CD8-positive, alpha-beta memory T cell (primary cell): ENCODE measurements at regions of chr14 and their contacts with region 1.

Region 1: GRCh38 chr14:74860906-74861733 is 14.8 kb downstream of the PROX2 start:
- DNase-seq: peak; percentile 76 to 92 (median 86)
- H3K4me3 ChIP-seq: no peak overlapping the region
- H3K4me3 Mint-ChIP-seq: no peak overlapping the region
- H3K27ac ChIP-seq: no peak overlapping the region
- H3K27ac Mint-ChIP-seq: no peak overlapping the region
- H3K4me1 ChIP-seq: peaks cover 8% of the 10 kb centered on the region
- H3K4me1 Mint-ChIP-seq: peaks cover 4 to 7% (median 6%) of the 10 kb centered on the region in 3 donors
- H3K27me3 ChIP-seq: no peaks in the 10 kb centered on the region
- H3K27me3 Mint-ChIP-seq: peaks cover 0 to 1% of the 10 kb centered on the region in 2 donors

Region 2: GRCh38 chr14:74841230-74842207 is 19.6 kb before region 1 on chr14:
- CTCF ChIA-PET with region 1: interaction called, 15 read pairs
- POLR2A ChIA-PET with region 1: interaction called, 3 read pairs
- DNase-seq: peak in 1 of 5 donors; percentile 11
- H3K4me3 ChIP-seq: no peak overlapping the region
- H3K4me3 Mint-ChIP-seq: peak overlapping the region in 6 of 7 donors; percentile 26 to 42 (median 36)
- H3K27ac ChIP-seq: no peak overlapping the region
- H3K27ac Mint-ChIP-seq: peak overlapping the region; percentile 69 to 99 (median 90)
- H3K4me1 ChIP-seq: peaks cover 68% of the 10 kb centered on the region
- H3K4me1 Mint-ChIP-seq: peaks cover 51 to 62% (median 60%) of the 10 kb centered on the region in 3 donors
- H3K27me3 ChIP-seq: no peaks in the 10 kb centered on the region
- H3K27me3 Mint-ChIP-seq: no peaks in the 10 kb centered on the region

Region 3: GRCh38 chr14:74893614-74894091 is 32.5 kb after region 1 on chr14:
- CTCF ChIA-PET with region 1: interaction called, 50 read pairs
- POLR2A ChIA-PET with region 1: interaction called, 3 read pairs
- DNase-seq: no peak
- H3K4me3 ChIP-seq: no peak overlapping the region
- H3K4me3 Mint-ChIP-seq: no peak overlapping the region
- H3K27ac ChIP-seq: no peak overlapping the region
- H3K27ac Mint-ChIP-seq: peak overlapping the region in 3 of 8 donors; percentile 47 to 86 (median 69)
- H3K4me1 ChIP-seq: peaks cover 3% of the 10 kb centered on the region
- H3K4me1 Mint-ChIP-seq: peaks cover 7 to 17% (median 8%) of the 10 kb centered on the region in 3 donors
- H3K27me3 ChIP-seq: no peaks in the 10 kb centered on the region
- H3K27me3 Mint-ChIP-seq: no peaks in the 10 kb centered on the region

Region 4: DNA sequence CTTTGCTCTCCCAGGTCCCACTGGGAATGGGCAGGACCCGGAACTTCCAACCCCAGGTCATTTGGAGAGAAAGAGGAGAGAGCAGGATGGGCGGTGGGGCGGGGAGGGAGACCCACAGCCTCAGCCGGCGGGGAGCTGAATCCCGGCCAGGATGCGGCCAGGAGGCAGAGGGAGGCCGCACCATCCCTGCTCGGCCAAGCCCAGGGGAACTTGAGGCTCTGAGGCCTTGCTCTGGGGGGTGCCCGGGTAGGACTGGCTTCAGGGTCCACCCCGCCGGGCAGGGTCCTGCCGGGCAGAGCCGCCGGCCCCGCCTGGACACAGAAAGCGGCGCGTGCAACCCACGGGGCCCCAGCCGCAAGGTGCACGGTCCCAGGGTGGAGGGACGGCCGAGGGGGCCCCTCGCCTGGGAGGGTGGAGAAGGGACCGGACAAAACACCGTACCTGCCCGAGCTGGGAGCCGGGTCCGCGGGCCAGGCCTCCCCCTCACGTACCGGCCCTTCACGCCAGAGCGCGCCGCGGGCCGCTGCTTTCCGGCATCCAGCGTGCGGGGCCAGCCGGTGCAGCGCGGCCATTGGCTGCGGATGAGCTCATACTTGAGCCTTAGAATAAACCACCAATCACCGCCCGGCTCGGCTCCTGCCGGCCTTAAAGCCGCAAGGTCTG is 61.8 kb after region 1 on chr14 and contains the start of gene RPS6KL1:
- CTCF ChIA-PET with region 1: interaction called, 13 read pairs
- POLR2A ChIA-PET with region 1: no interaction called
- DNase-seq: peak; percentile 29 to 74 (median 47)
- H3K4me3 ChIP-seq: no peak within 1 kb of the TSS
- H3K4me3 Mint-ChIP-seq: peak within 1 kb of the TSS in 6 of 7 donors; percentile 37 to 76 (median 58)
- H3K27ac ChIP-seq: no peak within 1 kb of the TSS
- H3K27ac Mint-ChIP-seq: peak within 1 kb of the TSS in 1 of 8 donors; percentile 32
- H3K4me1 ChIP-seq: peaks cover 5% of the 10 kb centered on the region
- H3K4me1 Mint-ChIP-seq: peaks cover 0 to 13% (median 1%) of the 10 kb centered on the region in 3 donors
- H3K27me3 ChIP-seq: no peaks in the 10 kb centered on the region
- H3K27me3 Mint-ChIP-seq: peaks cover 4 to 20% of the 10 kb centered on the region in 2 donors
- total RNA-seq, gene RPS6KL1: 4.8 to 5.0 TPM

Region 5: GRCh38 chr14:74963705-74964271 is 102.7 kb after region 1 on chr14:
- CTCF ChIA-PET with region 1: no interaction called
- POLR2A ChIA-PET with region 1: no interaction called
- DNase-seq: no peak
- H3K4me3 ChIP-seq: no peak overlapping the region
- H3K4me3 Mint-ChIP-seq: no peak overlapping the region
- H3K27ac ChIP-seq: no peak overlapping the region
- H3K27ac Mint-ChIP-seq: peak overlapping the region in 1 of 8 donors; percentile 96
- H3K4me1 ChIP-seq: no peaks in the 10 kb centered on the region
- H3K4me1 Mint-ChIP-seq: no peaks in the 10 kb centered on the region
- H3K27me3 ChIP-seq: no peaks in the 10 kb centered on the region
- H3K27me3 Mint-ChIP-seq: peaks cover 9 to 16% of the 10 kb centered on the region in 2 donors

Region 6: GRCh38 chr14:75088574-75089373 is 227.7 kb after region 1 on chr14:
- CTCF ChIA-PET with region 1: interaction called, 37 read pairs
- POLR2A ChIA-PET with region 1: no interaction called
- DNase-seq: peak in 3 of 5 donors; percentile 14 to 34 (median 32)
- H3K4me3 ChIP-seq: no peak overlapping the region
- H3K4me3 Mint-ChIP-seq: no peak overlapping the region
- H3K27ac ChIP-seq: no peak overlapping the region
- H3K27ac Mint-ChIP-seq: no peak overlapping the region
- H3K4me1 ChIP-seq: no peaks in the 10 kb centered on the region
- H3K4me1 Mint-ChIP-seq: no peaks in the 10 kb centered on the region
- H3K27me3 ChIP-seq: no peaks in the 10 kb centered on the region
- H3K27me3 Mint-ChIP-seq: no peaks in the 10 kb centered on the region

Region 7: DNA sequence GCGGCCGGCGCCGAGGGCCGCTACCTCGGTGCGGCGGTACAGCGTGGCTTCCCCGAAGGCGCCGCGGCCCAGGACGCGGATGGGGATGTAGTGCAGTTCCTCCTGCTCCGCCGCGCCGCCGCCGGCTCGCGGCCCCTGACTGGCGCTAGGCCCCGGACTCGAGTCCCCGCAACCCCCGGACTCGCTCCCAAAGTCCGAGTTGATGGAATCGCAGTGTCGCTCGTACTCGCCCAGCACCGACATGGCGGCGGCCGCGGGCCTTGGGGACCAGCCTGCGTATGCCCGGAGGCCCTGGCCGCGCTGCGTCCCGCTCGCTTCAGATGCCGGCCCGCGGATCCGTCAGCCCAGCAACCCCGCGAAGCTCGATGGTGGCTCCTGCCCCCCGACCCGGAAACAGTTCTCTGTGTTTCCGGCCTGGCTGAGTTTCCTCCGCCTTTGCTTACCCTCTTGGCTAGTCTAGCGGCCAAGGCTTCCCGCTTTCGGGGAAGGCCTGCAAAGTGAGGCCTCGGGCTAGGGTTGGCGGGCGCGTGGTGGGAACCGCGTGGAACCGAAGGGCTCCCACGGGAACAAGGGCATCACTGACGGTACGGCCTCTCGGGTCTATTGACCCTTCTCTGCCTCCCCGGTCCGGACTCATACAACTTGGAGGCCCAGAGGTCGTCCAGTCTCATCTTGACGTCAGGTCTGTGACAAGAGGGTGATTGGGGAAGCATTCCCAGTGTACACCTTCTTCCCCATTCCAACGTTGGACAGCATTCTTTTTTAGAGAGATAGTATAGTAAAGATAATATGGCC is 265.8 kb after region 1 on chr14 and contains the start of gene NEK9:
- CTCF ChIA-PET with region 1: no interaction called
- POLR2A ChIA-PET with region 1: no interaction called
- DNase-seq: peak; percentile 80 to 93 (median 85)
- H3K4me3 ChIP-seq: peak within 1 kb of the TSS; percentile 99
- H3K4me3 Mint-ChIP-seq: peak within 1 kb of the TSS; percentile 95 to 98 (median 97)
- H3K27ac ChIP-seq: peak within 1 kb of the TSS; percentile 95
- H3K27ac Mint-ChIP-seq: peak within 1 kb of the TSS; percentile 97 to 99 (median 98)
- H3K4me1 ChIP-seq: peaks cover 36% of the 10 kb centered on the region
- H3K4me1 Mint-ChIP-seq: peaks cover 35 to 53% (median 52%) of the 10 kb centered on the region in 3 donors
- H3K27me3 ChIP-seq: no peaks in the 10 kb centered on the region
- H3K27me3 Mint-ChIP-seq: no peaks in the 10 kb centered on the region
- total RNA-seq, gene NEK9: 72.2 to 74.0 TPM